CD4-positive, alpha-beta memory T cell (primary cell): ENCODE measurements at regions of chrX and their contacts with region 1.

Region 1: DNA sequence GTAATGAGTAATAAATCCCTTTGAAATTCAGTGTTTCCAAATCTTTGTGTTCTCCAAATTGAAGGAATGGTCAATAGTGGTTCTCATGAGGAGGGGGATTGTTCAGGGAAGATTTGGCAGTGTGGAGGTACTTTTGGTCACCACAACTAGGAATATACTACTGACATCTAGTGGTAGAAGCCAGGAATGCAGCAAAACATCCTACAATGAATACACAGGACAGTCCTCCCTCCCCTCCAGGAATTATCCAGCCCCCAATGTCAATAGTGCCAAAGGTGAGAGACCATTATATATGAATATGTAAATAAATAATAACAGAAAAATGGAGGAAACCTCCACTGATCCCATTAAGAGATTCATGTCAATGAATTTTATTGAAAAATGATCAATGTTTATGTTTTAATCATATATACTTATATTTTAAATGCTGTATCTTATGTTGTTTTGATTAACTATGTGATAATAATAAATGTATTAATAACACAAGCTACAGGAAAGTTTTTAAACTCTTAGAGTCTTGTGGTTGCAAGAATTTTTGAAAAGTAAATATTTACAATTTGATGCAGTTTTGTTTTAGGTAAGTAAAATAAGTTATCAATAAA is 14.4 kb upstream of the FAM9A start:
- DNase-seq: peak in 4 of 5 donors; percentile 18 to 40 (median 32)
- H3K4me3 ChIP-seq: no peak overlapping the region
- H3K4me3 Mint-ChIP-seq: no peak overlapping the region
- H3K27ac ChIP-seq: no peak overlapping the region
- H3K27ac Mint-ChIP-seq: no peak overlapping the region
- H3K4me1 ChIP-seq: no peaks in the 10 kb centered on the region
- H3K4me1 Mint-ChIP-seq: no peaks in the 10 kb centered on the region
- H3K27me3 ChIP-seq: no peaks in the 10 kb centered on the region
- H3K27me3 Mint-ChIP-seq: peaks cover 0 to 2% of the 10 kb centered on the region in 2 donors

Region 2: GRCh38 chrX:8748855-8749254 is 66.7 kb before region 1 on chrX:
- CTCF ChIA-PET with region 1: interaction called, 8 read pairs
- POLR2A ChIA-PET with region 1: no interaction called
- intact Hi-C with region 1: loop called (anchors 1 kb)
- DNase-seq: peak in 4 of 5 donors; percentile 15 to 28 (median 15)
- H3K4me3 ChIP-seq: no peak overlapping the region
- H3K4me3 Mint-ChIP-seq: no peak overlapping the region
- H3K27ac ChIP-seq: no peak overlapping the region
- H3K27ac Mint-ChIP-seq: no peak overlapping the region
- H3K4me1 ChIP-seq: no peaks in the 10 kb centered on the region
- H3K4me1 Mint-ChIP-seq: peaks cover 0 to 3% (median 0%) of the 10 kb centered on the region in 4 donors
- H3K27me3 ChIP-seq: no peaks in the 10 kb centered on the region
- H3K27me3 Mint-ChIP-seq: peaks cover 5 to 7% of the 10 kb centered on the region in 2 donors

Region 3: GRCh38 chrX:8783100-8784098 is 32.2 kb before region 1 on chrX:
- CTCF ChIA-PET with region 1: no interaction called
- POLR2A ChIA-PET with region 1: no interaction called
- intact Hi-C with region 1: no loop called
- DNase-seq: peak; percentile 20 to 39 (median 33)
- H3K4me3 ChIP-seq: no peak overlapping the region
- H3K4me3 Mint-ChIP-seq: peak overlapping the region in 7 of 8 donors; percentile 17 to 69 (median 51)
- H3K27ac ChIP-seq: no peak overlapping the region
- H3K27ac Mint-ChIP-seq: peak overlapping the region in 1 of 7 donors; percentile 72
- H3K4me1 ChIP-seq: no peaks in the 10 kb centered on the region
- H3K4me1 Mint-ChIP-seq: peaks cover 0 to 4% (median 3%) of the 10 kb centered on the region in 4 donors
- H3K27me3 ChIP-seq: no peaks in the 10 kb centered on the region
- H3K27me3 Mint-ChIP-seq: peaks cover 0 to 2% of the 10 kb centered on the region in 2 donors